Ovary (tissue), 10 donors: ENCODE measurements at regions of chr11 and their contacts with region 1.

Region 1: GRCh38 chr11:102495161-102496042 is 35.1 kb downstream of the MMP7 start:
- DNase-seq: peak in 2 of 5 donors; percentile 19 to 50
- H3K4me3 ChIP-seq: no peak overlapping the region
- H3K27ac ChIP-seq: no peak overlapping the region
- H3K4me1 ChIP-seq: no peaks in the 10 kb centered on the region
- H3K27me3 ChIP-seq: no peaks in the 10 kb centered on the region
- CTCF ChIP-seq: peak; percentile 50 to 76 (median 73)
- EP300 ChIP-seq: no peak
- POLR2A ChIP-seq: no peak

Region 2: GRCh38 chr11:102157219-102157618 is 338.2 kb before region 1 on chr11:
- intact Hi-C with region 1: no loop called
- DNase-seq: peak in 4 of 5 donors; percentile 58 to 83 (median 74)
- H3K4me3 ChIP-seq: no peak overlapping the region
- H3K27ac ChIP-seq: no peak overlapping the region
- H3K4me1 ChIP-seq: peaks cover 9% of the 10 kb centered on the region
- H3K27me3 ChIP-seq: no peaks in the 10 kb centered on the region
- CTCF ChIP-seq: no peak
- EP300 ChIP-seq: no peak
- POLR2A ChIP-seq: no peak

Region 3: GRCh38 chr11:102287964-102288724 is 207.3 kb before region 1 on chr11:
- intact Hi-C with region 1: loop called in 1 of 4 experiments (anchors 5 kb)
- DNase-seq: peak in 4 of 5 donors; percentile 38 to 51 (median 47)
- H3K4me3 ChIP-seq: peak overlapping the region; percentile 21
- H3K27ac ChIP-seq: peak overlapping the region in 1 of 2 donors; percentile 5
- H3K4me1 ChIP-seq: peaks cover 9% of the 10 kb centered on the region
- H3K27me3 ChIP-seq: no peaks in the 10 kb centered on the region
- CTCF ChIP-seq: peak; percentile 60 to 73 (median 66)
- EP300 ChIP-seq: no peak
- POLR2A ChIP-seq: no peak

Region 4: GRCh38 chr11:102346748-102347461 is 148.5 kb before region 1 on chr11 and contains the start of gene BIRC2:
- intact Hi-C with region 1: loop called in 2 of 4 experiments (anchors 10 kb)
- DNase-seq: peak; percentile 94 to 98 (median 97)
- H3K4me3 ChIP-seq: peak within 1 kb of the TSS; percentile 62
- H3K27ac ChIP-seq: peak within 1 kb of the TSS; percentile 98 to 99
- H3K4me1 ChIP-seq: peaks cover 2% of the 10 kb centered on the region
- H3K27me3 ChIP-seq: no peaks in the 10 kb centered on the region
- CTCF ChIP-seq: peak; percentile 75 to 97 (median 94)
- EP300 ChIP-seq: peak; percentile 3
- POLR2A ChIP-seq: peak; percentile 95
- total RNA-seq, gene BIRC2: 27.1 to 57.8 (median 33.6) TPM

Region 5: DNA sequence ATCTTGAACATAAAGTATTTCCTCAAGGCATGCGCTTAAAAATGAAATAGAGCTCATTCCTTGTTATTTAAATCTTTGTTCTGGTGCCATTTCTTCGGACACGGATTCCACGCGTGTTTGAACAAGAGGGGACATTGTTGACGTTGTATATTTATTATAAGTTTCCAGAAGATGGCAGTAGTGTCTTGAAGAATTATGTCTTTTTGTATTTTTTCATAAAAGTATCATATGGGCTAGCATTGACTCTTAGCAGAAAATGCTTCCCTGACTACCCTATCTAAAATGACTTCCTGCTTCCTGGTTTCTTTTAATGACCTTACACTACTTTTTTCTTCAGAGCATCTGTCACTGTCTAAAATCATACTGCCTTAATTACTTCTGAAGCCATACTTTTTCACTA is 128.0 kb before region 1 on chr11:
- intact Hi-C with region 1: loop called in 1 of 4 experiments (anchors 10 kb)
- DNase-seq: no peak
- H3K4me3 ChIP-seq: no peak overlapping the region
- H3K27ac ChIP-seq: no peak overlapping the region
- H3K4me1 ChIP-seq: no peaks in the 10 kb centered on the region
- H3K27me3 ChIP-seq: no peaks in the 10 kb centered on the region
- CTCF ChIP-seq: no peak
- EP300 ChIP-seq: no peak
- POLR2A ChIP-seq: no peak